Mammary epithelial cell (primary cell): ENCODE measurements at regions of chr14 and their contacts with region 1.

Region 1: DNA sequence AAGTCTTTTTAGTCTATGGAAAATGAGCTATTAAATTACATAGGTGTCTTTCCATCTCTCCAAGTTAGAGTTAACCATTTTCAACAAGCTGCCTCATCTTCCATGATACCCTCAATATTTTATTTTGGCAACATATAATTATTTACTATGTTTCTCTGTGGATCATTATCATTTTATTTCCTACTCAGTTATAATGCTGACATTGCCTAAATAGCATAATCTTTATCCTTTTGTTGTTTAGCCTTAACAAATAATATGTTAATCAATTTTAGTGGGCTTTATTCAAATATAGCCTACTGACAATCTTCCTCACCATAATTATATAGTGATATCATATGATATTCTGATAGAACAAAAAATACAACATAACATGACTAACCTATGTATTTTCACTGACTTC is 1044.8 kb upstream of the FOXG1 start:
- DNase-seq: no peak
- H3K4me3 ChIP-seq: no peak overlapping the region
- H3K27ac ChIP-seq: no peak overlapping the region
- H3K4me1 ChIP-seq: no peaks in the 10 kb centered on the region
- H3K27me3 ChIP-seq: no peaks in the 10 kb centered on the region
- CTCF ChIP-seq: no peak

Region 2: DNA sequence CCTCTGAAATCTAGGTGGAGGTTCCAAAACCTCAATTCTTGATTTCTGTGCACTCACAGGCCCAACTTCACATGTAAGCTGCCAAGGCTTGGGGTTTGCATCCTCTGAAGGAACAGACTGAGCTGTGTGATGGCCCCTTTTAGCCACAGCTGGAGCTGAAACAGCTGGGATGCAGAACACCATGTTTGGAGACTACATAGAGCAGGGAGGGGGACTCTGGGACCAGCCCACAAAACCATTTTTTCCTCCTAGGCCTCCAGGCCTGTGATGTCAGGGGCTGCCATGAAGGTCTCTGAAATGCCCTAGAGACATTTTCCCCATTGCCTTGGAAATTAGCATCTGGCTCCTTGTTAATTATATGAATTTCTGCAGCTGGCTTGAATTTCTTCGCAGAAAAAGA is 98.0 kb before region 1 on chr14:
- CTCF ChIA-PET with region 1: no interaction called
- dilution Hi-C with region 1: loop called (anchors 5 kb)
- in situ Hi-C with region 1: no loop called
- intact Hi-C with region 1: no loop called
- DNase-seq: no peak
- H3K4me3 ChIP-seq: no peak overlapping the region
- H3K27ac ChIP-seq: no peak overlapping the region
- H3K4me1 ChIP-seq: no peaks in the 10 kb centered on the region
- H3K27me3 ChIP-seq: no peaks in the 10 kb centered on the region
- CTCF ChIP-seq: no peak

Region 3: DNA sequence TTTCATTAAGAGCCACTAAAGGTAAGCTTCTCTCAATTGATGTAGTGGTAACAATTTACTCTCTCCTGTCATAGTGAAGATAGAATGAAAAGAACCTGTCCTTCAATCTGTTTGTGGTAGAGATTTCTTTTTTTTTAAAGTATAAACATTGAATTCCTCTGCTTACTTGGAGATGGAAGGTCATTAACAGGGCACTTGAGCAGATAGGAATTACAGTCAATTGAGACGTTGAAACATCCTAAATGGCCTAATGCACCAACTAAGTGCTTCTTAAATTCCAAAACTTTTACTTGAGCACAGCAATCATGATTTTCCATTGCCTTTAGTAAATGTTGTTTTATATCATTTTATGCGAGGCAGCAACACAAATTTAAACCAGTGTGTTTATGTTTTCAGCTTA is 1286.2 kb after region 1 on chr14:
- CTCF ChIA-PET with region 1: no interaction called
- dilution Hi-C with region 1: no loop called
- in situ Hi-C with region 1: no loop called
- intact Hi-C with region 1: no loop called
- DNase-seq: no peak
- H3K4me3 ChIP-seq: no peak overlapping the region
- H3K27ac ChIP-seq: no peak overlapping the region
- H3K4me1 ChIP-seq: no peaks in the 10 kb centered on the region
- H3K27me3 ChIP-seq: no peaks in the 10 kb centered on the region
- CTCF ChIP-seq: no peak